G401 (cell line): ENCODE measurements at regions of chr10 and their contacts with region 1.

Region 1: GRCh38 chr10:104028146-104028545 is 57.5 kb downstream of the COL17A1 start:
- DNase-seq: peak; percentile 65

Region 2: DNA sequence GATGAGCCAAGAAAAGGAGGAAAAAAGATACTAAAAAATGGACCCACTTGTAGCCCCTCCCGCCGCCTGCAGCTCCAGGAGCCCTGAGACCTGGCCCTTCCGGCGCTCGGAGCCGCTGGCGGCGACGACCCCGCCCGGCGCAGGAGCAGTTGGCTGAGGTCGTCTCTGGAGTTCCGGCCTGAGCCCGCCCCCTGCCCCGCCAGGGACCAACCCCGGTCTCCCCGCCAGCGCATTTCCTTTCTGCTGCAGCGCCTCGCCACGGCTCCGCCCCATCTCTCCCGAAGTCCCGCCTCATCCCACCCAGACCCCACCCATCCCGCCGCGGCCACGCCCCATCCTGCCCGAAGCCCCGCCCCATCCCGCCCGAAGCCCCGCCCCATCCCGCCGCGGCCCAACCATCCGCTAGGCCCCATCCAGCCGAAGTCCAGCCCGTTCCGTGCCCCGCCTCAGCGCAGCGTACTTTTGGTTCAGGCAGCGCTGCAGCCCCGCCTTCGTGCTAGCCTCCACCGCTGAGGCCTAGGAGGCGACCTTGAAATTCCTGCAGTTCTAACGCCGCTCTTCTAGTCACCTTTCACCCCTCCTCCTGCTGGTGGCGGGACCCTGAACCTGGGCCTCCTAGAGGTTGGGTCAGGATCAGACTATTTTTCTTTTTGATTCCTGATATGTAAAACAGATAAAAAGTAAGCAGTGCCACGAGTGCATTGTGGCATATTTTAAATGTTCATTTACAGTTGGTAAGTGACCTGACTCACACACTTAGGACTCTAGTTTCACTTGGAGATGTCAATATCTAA is 109.9 kb before region 1 on chr10 and contains the start of gene STN1:
- in situ Hi-C with region 1: loop called (anchors 10 kb)
- DNase-seq: peak; percentile 97
- total RNA-seq, gene STN1: 24.1 and 28.7 TPM in 2 replicates